ENCODE measurements at regions of chr17 and their contacts with region 1.

Region 1: DNA sequence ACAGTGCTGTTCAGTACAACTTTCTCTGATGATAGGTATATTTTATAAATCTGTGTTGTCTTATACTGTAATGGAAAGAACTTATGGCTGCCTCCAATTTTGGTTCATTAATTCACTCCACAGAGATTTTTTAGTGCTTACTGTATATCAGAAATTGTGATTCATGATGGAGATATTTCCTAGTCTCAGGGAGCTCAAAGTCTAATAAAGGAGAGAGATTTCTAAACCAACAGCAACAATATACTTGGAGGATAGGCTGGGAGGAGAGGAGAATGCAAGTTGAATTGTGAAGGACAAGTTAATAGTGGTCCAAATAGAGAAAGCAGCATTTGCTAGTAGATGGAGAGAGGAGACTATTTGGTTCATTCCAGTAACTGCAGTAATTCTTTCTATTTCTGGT is 63.5 kb downstream of the TANC2 start:
- DNase-seq: no peak
- H3K4me3 ChIP-seq: no peak overlapping the region
- H3K27ac ChIP-seq: no peak overlapping the region
- H3K4me1 ChIP-seq: no peaks in the 10 kb centered on the region
- H3K27me3 ChIP-seq: no peaks in the 10 kb centered on the region
- CTCF ChIP-seq: no peak
- EP300 ChIP-seq: no peak
- POLR2A ChIP-seq: no peak

Region 2: GRCh38 chr17:61486135-61487120 is 1543.1 kb before region 1 on chr17:
- intact Hi-C with region 1: loop called (anchors 10 kb)
- DNase-seq: no peak
- H3K4me3 ChIP-seq: no peak overlapping the region
- H3K27ac ChIP-seq: no peak overlapping the region
- H3K4me1 ChIP-seq: peaks cover 0 to 10% (median 7%) of the 10 kb centered on the region in 4 donors
- H3K27me3 ChIP-seq: no peaks in the 10 kb centered on the region
- CTCF ChIP-seq: no peak
- EP300 ChIP-seq: no peak
- POLR2A ChIP-seq: no peak

Region 3: DNA sequence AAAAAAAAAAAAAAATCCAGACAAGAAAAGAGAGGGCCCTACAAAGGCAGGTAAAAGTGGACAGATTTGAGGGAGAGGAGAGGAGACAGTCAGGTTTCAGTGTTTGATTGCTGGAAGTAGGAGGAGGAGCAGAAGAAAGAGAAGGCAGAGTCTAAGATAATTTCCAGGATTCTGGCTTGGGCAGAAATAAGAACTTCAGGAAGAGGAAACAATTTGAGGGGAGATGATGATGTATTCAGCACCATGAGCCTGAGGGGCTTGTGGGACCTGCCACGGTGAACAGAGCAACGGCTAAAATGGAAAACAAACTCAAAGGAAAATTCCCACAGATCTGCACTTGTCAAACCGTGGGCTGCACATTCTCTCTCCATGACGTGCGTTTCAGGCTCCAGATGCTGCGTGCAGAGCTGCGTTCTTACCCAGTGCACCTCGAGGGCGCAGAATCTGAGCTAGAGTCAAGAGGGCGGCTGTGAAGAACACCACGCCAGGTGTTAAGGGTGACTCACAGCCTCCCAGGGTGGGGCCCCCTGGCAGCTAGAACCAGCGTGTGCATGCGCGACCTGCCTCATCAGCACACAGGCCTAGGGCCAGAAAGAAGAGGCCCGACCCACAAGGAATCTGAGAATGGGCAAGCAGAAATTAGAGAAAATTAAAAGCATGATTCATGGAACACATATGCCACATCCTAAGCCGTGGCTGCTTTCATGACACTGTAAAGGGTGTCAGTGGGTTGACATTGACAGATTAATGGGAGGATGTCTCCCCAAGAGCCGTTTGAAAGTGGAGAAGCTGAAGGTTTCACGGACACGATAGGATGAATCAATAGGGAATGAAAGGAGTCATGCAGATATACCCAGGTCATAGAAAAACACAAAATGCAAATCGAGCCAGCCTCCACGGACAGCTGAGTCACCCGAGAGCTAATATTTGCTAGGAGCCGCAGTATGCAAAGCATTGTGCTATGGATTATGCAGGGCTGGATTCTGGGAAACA is 250.6 kb before region 1 on chr17:
- intact Hi-C with region 1: no loop called
- DNase-seq: no peak
- H3K4me3 ChIP-seq: no peak overlapping the region
- H3K27ac ChIP-seq: no peak overlapping the region
- H3K4me1 ChIP-seq: peaks cover 0 to 6% (median 2%) of the 10 kb centered on the region in 4 donors
- H3K27me3 ChIP-seq: no peaks in the 10 kb centered on the region
- CTCF ChIP-seq: no peak
- EP300 ChIP-seq: no peak
- POLR2A ChIP-seq: no peak

Region 4: DNA sequence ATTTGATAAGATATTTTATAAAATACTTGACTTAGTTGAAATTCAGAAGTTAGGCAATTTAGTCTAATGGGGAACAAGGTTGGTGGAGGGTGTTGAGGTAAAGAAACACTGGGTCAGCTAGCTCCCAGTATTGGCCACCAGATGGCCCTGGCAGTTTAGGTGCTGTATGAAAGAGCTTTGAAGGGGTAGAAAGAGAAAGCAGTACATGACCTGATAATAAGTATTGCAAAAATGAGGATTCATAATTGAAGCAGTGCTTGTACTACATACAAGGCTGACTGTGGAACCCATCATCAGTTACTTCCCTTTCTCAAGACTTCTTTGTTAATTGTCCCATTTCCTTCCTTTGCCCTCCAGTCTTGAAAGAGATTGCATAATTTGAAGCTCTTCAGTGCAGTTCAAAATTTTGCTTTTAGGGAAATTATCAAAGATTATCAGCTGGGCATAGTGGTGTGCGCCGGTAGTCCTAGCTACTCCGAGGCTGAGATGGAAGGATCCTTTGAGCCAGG is 34.1 kb before region 1 on chr17:
- intact Hi-C with region 1: no loop called
- DNase-seq: no peak
- H3K4me3 ChIP-seq: no peak overlapping the region
- H3K27ac ChIP-seq: no peak overlapping the region
- H3K4me1 ChIP-seq: no peaks in the 10 kb centered on the region
- H3K27me3 ChIP-seq: no peaks in the 10 kb centered on the region
- CTCF ChIP-seq: no peak
- EP300 ChIP-seq: no peak
- POLR2A ChIP-seq: no peak

Measured in sigmoid colon (tissue), 7 donors.